ENCODE measurements at regions of chr1 and their contacts with region 1.

Region 1: DNA sequence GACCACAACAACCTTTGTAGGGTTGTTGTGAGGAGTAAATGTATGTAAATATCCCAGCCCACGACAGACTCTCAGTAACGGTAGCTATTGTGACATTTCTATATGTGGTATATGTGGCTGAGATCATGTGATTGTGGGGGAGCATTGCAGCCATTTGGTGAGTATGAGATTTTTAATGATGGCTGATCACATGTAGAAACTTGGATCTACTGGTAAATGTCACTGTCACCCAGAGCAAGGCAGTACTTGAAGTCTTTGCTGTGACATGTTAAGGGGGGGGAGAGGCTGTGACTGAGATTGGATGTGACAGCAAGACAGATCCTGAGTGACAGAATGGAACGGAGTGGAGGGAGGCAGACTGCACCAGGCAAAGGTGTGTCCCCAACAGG is 23.9 kb upstream of the MEF2D start:
- DNase-seq: peak in 2 of 4 experiments; percentile 30 to 34
- ATAC-seq: peak; percentile 67
- H3K4me3 ChIP-seq: no peak overlapping the region
- H3K27ac ChIP-seq: peak overlapping the region; percentile 69
- H3K4me1 ChIP-seq: peaks cover 31 to 33% of the 10 kb centered on the region in 2 experiments
- H3K27me3 ChIP-seq: no peaks in the 10 kb centered on the region
- CTCF ChIP-seq: no peak
- EP300 ChIP-seq: no peak
- POLR2A ChIP-seq: no peak
- RAD21 ChIP-seq: no peak

Region 2: GRCh38 chr1:156308078-156308477 is 216.4 kb before region 1 on chr1:
- CTCF ChIA-PET with region 1: no interaction called
- POLR2A ChIA-PET with region 1: no interaction called
- in situ Hi-C with region 1: no loop called
- intact Hi-C with region 1: no loop called
- DNase-seq: peak in 2 of 4 experiments; percentile 36 to 38
- ATAC-seq: no peak
- H3K4me3 ChIP-seq: no peak overlapping the region
- H3K27ac ChIP-seq: no peak overlapping the region; the same call in 2 of the 3 replicates
- H3K4me1 ChIP-seq: no peaks in the 10 kb centered on the region
- H3K27me3 ChIP-seq: no peaks in the 10 kb centered on the region
- CTCF ChIP-seq: no peak
- EP300 ChIP-seq: no peak
- POLR2A ChIP-seq: peak; percentile 41; the same call in 1 of the 2 replicates
- RAD21 ChIP-seq: no peak

Region 3: GRCh38 chr1:156419854-156420204 is 104.6 kb before region 1 on chr1:
- CTCF ChIA-PET with region 1: no interaction called
- POLR2A ChIA-PET with region 1: no interaction called
- in situ Hi-C with region 1: no loop called
- intact Hi-C with region 1: no loop called
- DNase-seq: peak; percentile 35 to 65 (median 48)
- ATAC-seq: peak; percentile 66
- H3K4me3 ChIP-seq: peak overlapping the region; percentile 12; the same call in 1 of the 2 replicates
- H3K27ac ChIP-seq: no peak overlapping the region
- H3K4me1 ChIP-seq: peaks cover 41% of the 10 kb centered on the region in 2 experiments; a peak in 4 of 5 replicates
- H3K27me3 ChIP-seq: peaks cover 15 to 23% of the 10 kb centered on the region in 2 experiments; a peak in 3 of 5 replicates
- CTCF ChIP-seq: peak; percentile 51 to 62 (median 60)
- EP300 ChIP-seq: no peak
- POLR2A ChIP-seq: no peak
- RAD21 ChIP-seq: no peak

Region 4: GRCh38 chr1:156510709-156511108 is 13.8 kb before region 1 on chr1:
- CTCF ChIA-PET with region 1: no interaction called
- POLR2A ChIA-PET with region 1: interaction called, 15 read pairs
- in situ Hi-C with region 1: no loop called
- intact Hi-C with region 1: no loop called
- DNase-seq: no peak
- ATAC-seq: no peak
- H3K4me3 ChIP-seq: no peak overlapping the region
- H3K27ac ChIP-seq: no peak overlapping the region
- H3K4me1 ChIP-seq: peaks cover 9 to 18% of the 10 kb centered on the region in 2 experiments; a peak in 4 of 5 replicates
- H3K27me3 ChIP-seq: peaks cover 0 to 5% of the 10 kb centered on the region in 2 experiments; a peak in 2 of 5 replicates
- CTCF ChIP-seq: no peak
- EP300 ChIP-seq: no peak
- POLR2A ChIP-seq: no peak
- RAD21 ChIP-seq: no peak